B cell (primary cell): ENCODE measurements at regions of chr11 and their contacts with region 1.

Region 1: DNA sequence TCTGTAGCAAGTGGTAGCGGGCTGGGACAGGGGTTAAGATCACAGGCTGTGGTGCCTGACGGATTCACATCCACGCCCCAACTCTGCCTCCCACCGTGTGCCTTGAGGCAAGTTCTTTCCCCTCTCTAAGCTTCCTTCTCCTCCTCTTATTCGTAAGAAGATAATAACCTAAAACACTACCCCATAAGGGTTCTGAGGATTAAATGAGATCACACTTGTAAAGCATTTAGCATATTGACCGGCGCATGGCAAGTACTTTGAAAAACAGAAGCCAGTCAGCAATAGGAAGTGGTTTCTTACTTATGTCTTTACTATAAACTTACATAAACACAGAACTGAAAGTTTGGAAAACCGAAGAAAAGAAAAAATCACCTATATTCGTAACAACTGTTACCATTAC is 15.5 kb upstream of the LMO2 start:
- DNase-seq: peak; percentile 16
- ATAC-seq: peak; percentile 36
- H3K4me3 ChIP-seq: no peak overlapping the region
- H3K4me3 Mint-ChIP-seq: no peak overlapping the region
- H3K27ac ChIP-seq: no peak overlapping the region
- H3K27ac Mint-ChIP-seq: no peak overlapping the region
- H3K4me1 ChIP-seq: peaks cover 14 to 16% of the 10 kb centered on the region in 2 donors
- H3K4me1 Mint-ChIP-seq: peaks cover 20% of the 10 kb centered on the region
- H3K27me3 ChIP-seq: no peaks in the 10 kb centered on the region
- H3K27me3 Mint-ChIP-seq: peaks cover 3% of the 10 kb centered on the region
- CTCF ChIP-seq: no peak

Region 2: DNA sequence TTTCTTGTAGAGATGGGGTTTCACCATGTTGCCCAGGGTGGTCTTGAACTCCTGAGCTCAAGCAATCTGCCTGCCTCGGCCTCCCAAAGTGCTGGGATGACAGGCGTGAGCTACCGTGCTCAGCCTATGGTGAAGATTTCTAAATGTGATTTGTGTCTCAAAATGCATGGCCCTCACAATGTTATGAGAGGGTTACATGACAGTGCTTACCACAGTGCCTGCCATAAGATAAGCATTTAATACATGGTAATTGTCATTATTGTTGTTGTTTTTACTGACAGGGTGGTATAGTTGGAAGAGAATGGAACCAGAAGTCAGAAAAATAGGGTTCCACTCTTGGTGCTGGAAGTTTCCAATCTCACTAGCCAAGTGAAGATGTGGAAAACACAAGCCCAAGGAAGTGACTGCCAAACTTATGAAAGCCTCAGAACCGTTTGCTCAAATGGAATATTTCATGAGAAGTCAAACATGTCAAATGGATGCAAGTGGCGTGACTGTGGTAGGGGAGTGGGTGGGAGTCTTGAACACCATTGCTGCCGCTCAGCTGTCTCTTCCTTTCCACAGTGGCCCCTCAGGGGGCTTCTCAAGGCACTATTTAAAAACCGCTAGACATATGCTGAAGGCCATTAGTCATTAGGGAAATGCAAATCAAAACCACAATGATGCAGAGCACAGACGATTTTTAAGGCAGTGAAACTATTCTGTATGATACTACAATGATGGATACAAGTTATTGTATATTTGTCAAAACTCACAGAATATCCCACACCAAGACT is 13.6 kb after region 1 on chr11:
- CTCF ChIA-PET with region 1: no interaction called
- POLR2A ChIA-PET with region 1: no interaction called
- intact Hi-C with region 1: loop called (anchors 2 kb)
- DNase-seq: peak; percentile 74
- ATAC-seq: peak; percentile 93
- H3K4me3 ChIP-seq: no peak overlapping the region
- H3K4me3 Mint-ChIP-seq: peak overlapping the region; percentile 14
- H3K27ac ChIP-seq: no peak overlapping the region
- H3K27ac Mint-ChIP-seq: peak overlapping the region; percentile 7
- H3K4me1 ChIP-seq: peaks cover 10 to 14% of the 10 kb centered on the region in 2 donors
- H3K4me1 Mint-ChIP-seq: peaks cover 21% of the 10 kb centered on the region
- H3K27me3 ChIP-seq: peaks cover 0 to 46% (median 28%) of the 10 kb centered on the region in 4 experiments
- H3K27me3 Mint-ChIP-seq: peaks cover 60% of the 10 kb centered on the region
- CTCF ChIP-seq: no peak

Region 3: GRCh38 chr11:33942954-33943353 is 35.5 kb after region 1 on chr11:
- CTCF ChIA-PET with region 1: no interaction called
- POLR2A ChIA-PET with region 1: no interaction called
- intact Hi-C with region 1: loop called (anchors 5 kb)
- DNase-seq: no peak
- ATAC-seq: no peak
- H3K4me3 ChIP-seq: no peak overlapping the region
- H3K4me3 Mint-ChIP-seq: no peak overlapping the region
- H3K27ac ChIP-seq: no peak overlapping the region
- H3K27ac Mint-ChIP-seq: no peak overlapping the region
- H3K4me1 ChIP-seq: peaks cover 13 to 25% of the 10 kb centered on the region in 2 donors
- H3K4me1 Mint-ChIP-seq: peaks cover 30% of the 10 kb centered on the region
- H3K27me3 ChIP-seq: no peaks in the 10 kb centered on the region
- H3K27me3 Mint-ChIP-seq: peaks cover 4% of the 10 kb centered on the region
- CTCF ChIP-seq: no peak